ENCODE measurements at regions of chr18 and their contacts with region 1.

Region 1: GRCh38 chr18:3245853-3246634 is 1.6 kb upstream of the MYL12A start:
- DNase-seq: peak; percentile 92
- ATAC-seq: peak; percentile 69 to 78

Region 2: GRCh38 chr18:2932247-2933181 is 313.5 kb before region 1 on chr18:
- intact Hi-C with region 1: loop called (anchors 5 to 10 kb)
- DNase-seq: no peak
- ATAC-seq: peak; percentile 6 to 48

Region 3: DNA sequence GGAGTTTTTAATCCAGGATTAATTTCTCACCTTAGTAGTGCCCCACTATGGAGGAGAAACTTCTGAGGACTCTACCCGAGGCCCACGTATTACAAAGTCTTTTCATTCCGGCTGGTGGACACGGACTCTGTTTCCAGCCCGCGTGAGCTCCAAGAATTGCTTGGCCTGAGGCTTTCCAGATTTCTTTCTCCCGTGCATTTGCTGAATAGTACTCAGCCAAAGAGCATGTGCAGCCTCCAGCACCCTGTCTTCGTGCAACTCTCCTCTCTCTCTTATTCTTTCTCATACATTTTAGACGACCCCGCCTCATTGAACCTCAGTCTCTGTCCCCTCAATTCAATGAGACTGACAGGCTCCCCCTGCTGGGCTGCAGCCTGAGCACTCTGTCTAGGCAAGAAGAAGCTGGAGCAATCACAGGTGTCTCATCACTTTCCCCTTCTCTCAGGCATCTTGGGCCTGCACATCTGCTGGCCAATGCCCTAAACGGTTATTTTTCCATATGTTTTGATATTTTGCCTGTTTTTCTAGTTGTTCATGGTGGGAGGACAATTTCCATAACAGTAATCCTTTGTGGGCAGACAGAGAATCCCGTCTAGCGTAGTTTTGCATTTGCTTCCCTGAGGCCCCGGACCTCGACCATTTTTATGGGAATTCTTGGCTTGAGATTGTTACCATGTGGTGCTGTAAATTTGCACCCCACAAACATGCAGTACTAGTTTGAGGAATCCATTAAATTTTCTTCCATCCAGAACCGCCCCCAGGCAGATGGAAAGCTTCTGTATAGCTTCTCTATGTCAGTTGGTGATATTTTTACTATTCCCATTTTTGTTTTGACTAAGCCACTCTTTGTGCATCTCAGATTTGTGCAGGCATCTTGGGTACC is 183.0 kb before region 1 on chr18:
- intact Hi-C with region 1: loop called in 1 of 2 experiments (anchors 10 kb)
- DNase-seq: peak; percentile 76
- ATAC-seq: peak; percentile 56 to 77

Region 4: GRCh38 chr18:3151399-3152264 is 94.4 kb before region 1 on chr18:
- intact Hi-C with region 1: loop called in 1 of 2 experiments (anchors 10 kb)
- DNase-seq: no peak
- ATAC-seq: no peak

Region 5: DNA sequence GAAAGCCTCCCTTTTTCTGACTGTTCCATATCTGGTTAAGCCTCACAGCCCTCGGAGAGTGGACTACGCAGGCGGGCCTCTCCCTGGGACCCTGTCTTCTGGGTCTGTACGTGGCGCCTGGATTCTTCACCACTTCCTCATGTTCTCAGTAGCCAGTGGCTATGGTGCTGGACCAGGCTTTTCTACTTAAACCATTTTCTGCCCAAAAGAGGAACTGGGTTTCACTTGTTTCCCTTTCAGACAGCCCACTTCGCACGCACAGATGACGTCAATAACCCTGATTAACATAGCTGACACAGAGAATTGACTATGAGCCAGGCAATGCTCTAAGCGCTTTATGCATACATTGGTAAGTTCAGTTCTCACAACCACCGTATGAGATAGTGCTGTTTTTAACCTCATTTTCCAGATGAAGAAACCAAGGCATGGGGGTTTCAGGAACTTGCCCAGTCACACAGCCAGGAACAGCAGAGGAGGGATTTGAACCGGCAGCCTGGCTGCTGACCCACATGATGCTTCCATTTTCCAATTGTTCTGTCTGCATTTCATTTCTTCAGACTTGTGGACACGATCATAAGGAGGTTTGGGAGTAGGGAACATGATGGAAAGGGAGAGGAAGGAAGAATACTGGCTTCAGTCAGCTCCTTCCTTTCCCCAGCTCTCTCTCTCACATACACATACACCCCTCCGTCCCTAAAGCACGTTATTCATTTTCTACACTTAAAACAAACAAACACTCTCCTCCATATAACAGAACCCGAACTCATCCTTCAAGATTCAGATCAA is 67.9 kb before region 1 on chr18:
- intact Hi-C with region 1: loop called (anchors 5 to 10 kb)
- DNase-seq: peak; percentile 64
- ATAC-seq: peak; percentile 64 to 80

Region 6: GRCh38 chr18:3186678-3187658 is 59.1 kb before region 1 on chr18:
- intact Hi-C with region 1: loop called in 1 of 2 experiments (anchors 5 kb)
- DNase-seq: peak; percentile 28
- ATAC-seq: peak; percentile 53 to 71